ENCODE measurements at regions of chr4 and their contacts with region 1.

Region 1: DNA sequence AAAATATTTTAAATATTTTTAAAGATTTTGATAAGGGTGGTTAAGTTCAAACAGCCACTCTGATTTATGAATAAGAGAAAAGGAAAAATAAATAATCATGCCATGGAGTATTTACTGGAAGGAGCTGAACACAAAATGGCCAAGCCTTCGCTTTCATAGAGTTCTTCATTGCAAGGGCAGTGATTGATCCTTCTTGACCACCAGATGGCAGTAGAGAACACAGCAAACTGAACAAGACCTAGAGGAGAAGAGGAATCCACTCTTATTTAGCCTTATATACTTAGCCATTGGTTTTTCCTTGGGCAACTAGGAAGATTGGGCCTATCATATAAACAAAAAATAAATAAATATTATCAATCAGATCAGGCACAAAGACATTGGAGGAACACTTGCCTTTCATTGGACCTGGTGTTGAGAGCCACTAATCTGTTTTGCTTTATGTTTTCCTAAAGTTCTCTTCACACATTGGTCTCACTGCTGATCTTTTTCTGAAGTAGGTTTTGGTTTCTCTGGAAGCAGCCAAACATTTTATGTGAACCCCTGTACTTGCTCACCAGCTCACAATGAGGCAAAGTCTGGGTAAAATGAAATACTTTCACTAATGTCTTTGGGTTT is 58.1 kb upstream of the PARM1 start:
- H3K4me3 Mint-ChIP-seq: no peak overlapping the region
- H3K27ac Mint-ChIP-seq: no peak overlapping the region
- H3K4me1 Mint-ChIP-seq: no peaks in the 10 kb centered on the region
- H3K27me3 Mint-ChIP-seq: peaks cover 7% of the 10 kb centered on the region

Region 2: DNA sequence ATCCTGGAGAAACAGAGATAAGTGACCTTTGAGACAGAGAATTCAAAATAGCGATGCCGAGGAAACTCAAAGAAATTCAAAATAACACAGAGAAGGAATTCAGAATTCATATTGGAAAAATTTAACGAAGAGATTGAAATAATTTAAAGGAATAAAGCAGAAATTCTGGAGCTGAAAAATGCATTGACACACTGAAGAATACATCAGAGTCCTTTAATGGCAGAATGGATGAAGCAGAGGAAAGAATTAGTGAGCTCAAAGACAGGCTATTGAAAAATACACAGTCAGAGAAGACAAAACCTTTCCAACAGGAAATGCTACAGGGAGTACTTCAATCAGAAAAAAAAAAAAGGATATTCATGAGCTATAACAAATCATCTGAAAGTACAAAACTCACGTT is 243.9 kb after region 1 on chr4:
- intact Hi-C with region 1: loop called (anchors 2 kb)
- H3K4me3 Mint-ChIP-seq: no peak overlapping the region
- H3K27ac Mint-ChIP-seq: no peak overlapping the region
- H3K4me1 Mint-ChIP-seq: no peaks in the 10 kb centered on the region
- H3K27me3 Mint-ChIP-seq: peaks cover 4% of the 10 kb centered on the region

Region 3: DNA sequence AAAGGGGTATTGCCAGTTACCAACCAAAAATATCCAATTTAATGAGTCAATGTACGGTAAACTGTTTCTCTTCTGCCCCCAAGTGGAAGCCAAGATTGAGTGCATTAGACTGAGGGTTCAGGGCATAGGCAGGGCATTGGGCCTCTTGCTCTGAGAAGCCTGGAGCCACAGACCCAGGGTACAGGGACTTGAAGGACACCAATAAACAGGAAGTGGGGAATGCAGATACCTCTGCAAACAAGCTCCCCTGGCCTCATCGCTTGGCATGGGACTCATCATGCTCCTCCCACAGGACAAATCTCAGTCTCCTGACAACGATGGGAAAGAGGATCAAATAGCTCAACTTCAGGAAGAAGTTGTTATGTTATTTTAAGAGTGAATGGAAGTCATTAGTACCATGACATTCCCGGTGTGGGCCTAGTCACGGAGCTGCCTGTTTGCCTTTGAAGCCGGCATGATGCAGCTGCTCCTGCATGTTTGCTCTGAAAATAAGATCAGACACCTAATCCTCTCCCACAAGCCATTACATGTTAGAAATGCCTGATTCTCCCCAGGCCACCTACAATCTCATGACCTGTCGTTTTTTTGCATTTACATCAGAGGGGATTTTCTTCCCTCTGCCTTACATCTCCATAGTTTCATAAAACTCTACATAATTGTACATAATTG is 415.2 kb after region 1 on chr4:
- intact Hi-C with region 1: loop called (anchors 5 kb)
- H3K4me3 Mint-ChIP-seq: no peak overlapping the region
- H3K27ac Mint-ChIP-seq: no peak overlapping the region
- H3K4me1 Mint-ChIP-seq: no peaks in the 10 kb centered on the region
- H3K27me3 Mint-ChIP-seq: no peaks in the 10 kb centered on the region

Region 4: DNA sequence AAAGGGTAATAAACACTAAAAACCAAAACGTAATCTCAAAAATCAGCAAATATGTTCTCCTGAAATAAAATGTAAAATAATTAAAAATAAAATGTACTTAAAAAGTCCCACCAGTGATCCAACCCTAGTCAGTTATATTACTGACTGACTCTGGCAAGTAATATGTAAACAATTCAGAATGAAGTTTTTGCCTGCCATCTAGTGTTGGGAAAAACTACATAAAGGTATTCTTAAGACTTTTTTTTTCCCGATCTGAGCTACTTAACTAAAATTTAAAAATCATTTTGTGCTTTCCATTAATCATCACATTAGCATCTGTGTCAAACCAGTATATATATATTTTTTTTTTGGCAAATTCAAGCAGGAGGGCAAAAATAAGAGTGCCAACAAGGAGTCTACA is 615.3 kb after region 1 on chr4:
- intact Hi-C with region 1: loop called (anchors 5 kb)
- H3K4me3 Mint-ChIP-seq: no peak overlapping the region
- H3K27ac Mint-ChIP-seq: no peak overlapping the region
- H3K4me1 Mint-ChIP-seq: peaks cover 8% of the 10 kb centered on the region
- H3K27me3 Mint-ChIP-seq: no peaks in the 10 kb centered on the region